IMR-90 (cell line): ENCODE measurements at regions of chr22 and their contacts with region 1.

Region 1: GRCh38 chr22:31661851-31662656 is at the start of gene PISD:
- DNase-seq: peak; percentile 91
- ATAC-seq: peak; percentile 96
- H3K4me3 ChIP-seq: peak within 1 kb of the TSS; percentile 83
- H3K27ac ChIP-seq: peak within 1 kb of the TSS; percentile 48
- H3K4me1 ChIP-seq: peaks cover 3% of the 10 kb centered on the region
- H3K27me3 ChIP-seq: no peaks in the 10 kb centered on the region
- CTCF ChIP-seq: no peak
- POLR2A ChIP-seq: peak; percentile 70; the same call in 1 of the 2 replicates
- RAD21 ChIP-seq: no peak
- total RNA-seq, gene PISD: 29.2 and 34.1 TPM in 2 replicates

Region 2: GRCh38 chr22:31749636-31750364 is 87.7 kb after region 1 on chr22 and contains the start of gene PRR14L:
- CTCF ChIA-PET with region 1: no interaction called
- POLR2A ChIA-PET with region 1: no interaction called
- dilution Hi-C with region 1: no loop called
- in situ Hi-C with region 1: no loop called
- intact Hi-C with region 1: loop called (anchors 5 kb)
- DNase-seq: peak; percentile 90
- ATAC-seq: peak; percentile 86
- H3K4me3 ChIP-seq: peak within 1 kb of the TSS; percentile 73
- H3K27ac ChIP-seq: peak within 1 kb of the TSS; percentile 87
- H3K4me1 ChIP-seq: peaks cover 10% of the 10 kb centered on the region
- H3K27me3 ChIP-seq: no peaks in the 10 kb centered on the region
- CTCF ChIP-seq: peak; percentile 1; the same call in 1 of the 2 replicates
- POLR2A ChIP-seq: peak; percentile 85
- RAD21 ChIP-seq: peak; percentile 15; the same call in 1 of the 2 replicates
- total RNA-seq, gene PRR14L: 19.7 and 20.6 TPM in 2 replicates

Region 3: DNA sequence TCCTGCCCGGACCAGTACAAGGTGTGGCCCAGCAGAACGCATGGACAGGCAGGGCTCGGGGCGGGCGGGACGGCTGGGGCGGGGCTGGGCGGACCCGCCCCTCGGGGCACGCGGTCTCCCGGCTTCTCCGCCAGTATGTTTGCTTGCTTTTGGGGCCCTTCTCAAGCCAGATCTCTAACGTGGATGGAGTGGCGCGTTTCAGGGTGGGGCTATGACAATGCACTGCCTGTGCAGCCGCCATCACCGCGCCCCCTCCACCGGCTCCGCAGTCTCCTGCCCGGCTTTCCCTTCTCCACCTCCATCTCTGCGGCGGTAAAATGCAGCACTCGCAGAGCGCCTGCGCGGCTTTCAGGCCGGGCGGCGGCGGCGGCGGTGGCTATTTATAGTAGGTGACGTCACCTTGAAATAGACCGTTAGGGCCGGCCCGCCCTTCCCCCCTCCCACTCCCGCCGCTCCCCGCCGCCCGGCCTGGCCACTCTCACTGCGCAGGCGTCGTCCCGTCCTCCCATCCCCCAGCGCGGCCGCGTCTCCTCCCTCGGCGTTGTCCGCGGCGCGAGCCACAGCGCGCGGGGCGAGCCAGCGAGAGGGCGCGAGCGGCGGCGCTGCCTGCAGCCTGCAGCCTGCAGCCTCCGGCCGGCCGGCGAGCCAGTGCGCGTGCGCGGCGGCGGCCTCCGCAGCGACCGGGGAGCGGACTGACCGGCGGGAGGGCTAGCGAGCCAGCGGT is 282.1 kb after region 1 on chr22 and contains the start of gene YWHAH:
- CTCF ChIA-PET with region 1: no interaction called
- POLR2A ChIA-PET with region 1: no interaction called
- dilution Hi-C with region 1: no loop called
- in situ Hi-C with region 1: no loop called
- intact Hi-C with region 1: loop called (anchors 2 kb)
- DNase-seq: peak; percentile 89
- ATAC-seq: peak; percentile 91
- H3K4me3 ChIP-seq: peak within 1 kb of the TSS; percentile 79
- H3K27ac ChIP-seq: peak within 1 kb of the TSS; percentile 94
- H3K4me1 ChIP-seq: peaks cover 11% of the 10 kb centered on the region
- H3K27me3 ChIP-seq: no peaks in the 10 kb centered on the region
- CTCF ChIP-seq: 0 out of 2 replicates have a peak, but pooled peaks have one; percentile 2
- POLR2A ChIP-seq: peak; percentile 97
- RAD21 ChIP-seq: no peak
- total RNA-seq, gene YWHAH: 173 and 186 TPM in 2 replicates

Region 4: GRCh38 chr22:31970490-31971444 is 308.7 kb after region 1 on chr22:
- CTCF ChIA-PET with region 1: interaction called, 5 read pairs
- POLR2A ChIA-PET with region 1: no interaction called
- dilution Hi-C with region 1: no loop called
- in situ Hi-C with region 1: no loop called
- intact Hi-C with region 1: loop called (anchors 1 kb)
- DNase-seq: peak; percentile 51
- ATAC-seq: peak; percentile 99
- H3K4me3 ChIP-seq: peak overlapping the region; percentile 47
- H3K27ac ChIP-seq: no peak overlapping the region
- H3K4me1 ChIP-seq: no peaks in the 10 kb centered on the region
- H3K27me3 ChIP-seq: no peaks in the 10 kb centered on the region; the same call in 1 of the 2 replicates
- CTCF ChIP-seq: peak; percentile 91
- POLR2A ChIP-seq: no peak
- RAD21 ChIP-seq: peak; percentile 74

Region 5: GRCh38 chr22:32080904-32081303 is 418.9 kb after region 1 on chr22:
- CTCF ChIA-PET with region 1: no interaction called
- POLR2A ChIA-PET with region 1: no interaction called
- dilution Hi-C with region 1: no loop called
- in situ Hi-C with region 1: no loop called
- intact Hi-C with region 1: loop called (anchors 5 kb)
- DNase-seq: peak; percentile 47
- ATAC-seq: peak; percentile 79
- H3K4me3 ChIP-seq: no peak overlapping the region
- H3K27ac ChIP-seq: no peak overlapping the region
- H3K4me1 ChIP-seq: no peaks in the 10 kb centered on the region
- H3K27me3 ChIP-seq: peaks cover 17% of the 10 kb centered on the region
- CTCF ChIP-seq: peak; percentile 56
- POLR2A ChIP-seq: no peak
- RAD21 ChIP-seq: peak; percentile 71

Region 6: GRCh38 chr22:32265882-32266767 is 604.1 kb after region 1 on chr22:
- CTCF ChIA-PET with region 1: no interaction called
- POLR2A ChIA-PET with region 1: no interaction called
- dilution Hi-C with region 1: no loop called
- in situ Hi-C with region 1: no loop called
- intact Hi-C with region 1: loop called (anchors 10 kb)
- DNase-seq: peak; percentile 67
- ATAC-seq: peak; percentile 85
- H3K4me3 ChIP-seq: no peak overlapping the region
- H3K27ac ChIP-seq: no peak overlapping the region
- H3K4me1 ChIP-seq: no peaks in the 10 kb centered on the region
- H3K27me3 ChIP-seq: no peaks in the 10 kb centered on the region; the same call in 1 of the 2 replicates
- CTCF ChIP-seq: peak; percentile 87
- POLR2A ChIP-seq: no peak
- RAD21 ChIP-seq: peak; percentile 56